ENCODE measurements at regions of chr4 and their contacts with region 1.

Region 1: DNA sequence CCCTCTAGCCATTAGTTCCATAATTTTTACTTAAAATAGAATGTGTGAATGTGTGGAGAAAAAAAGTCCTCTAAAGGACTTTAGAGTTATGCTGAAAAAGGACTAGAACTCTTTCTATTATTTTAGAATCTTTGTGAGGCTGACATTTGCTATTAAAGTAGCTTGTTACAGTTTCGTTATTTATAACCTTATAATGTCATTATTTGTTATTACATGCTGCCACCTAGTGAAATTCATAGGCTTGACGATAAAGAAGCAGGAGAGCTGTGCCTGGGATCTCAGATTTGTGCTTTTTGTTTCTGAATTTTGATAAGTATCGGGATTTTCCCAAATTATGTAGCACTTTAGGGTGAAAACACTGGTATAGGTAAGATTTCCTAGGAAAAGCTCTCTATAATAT is 38.5 kb upstream of the TAPT1 start:
- DNase-seq: peak; percentile 24
- H3K4me3 ChIP-seq: no peak overlapping the region
- H3K27ac ChIP-seq: no peak overlapping the region
- H3K4me1 ChIP-seq: peaks cover 13% of the 10 kb centered on the region
- H3K27me3 ChIP-seq: no peaks in the 10 kb centered on the region
- CTCF ChIP-seq: peak; percentile 55

Region 2: DNA sequence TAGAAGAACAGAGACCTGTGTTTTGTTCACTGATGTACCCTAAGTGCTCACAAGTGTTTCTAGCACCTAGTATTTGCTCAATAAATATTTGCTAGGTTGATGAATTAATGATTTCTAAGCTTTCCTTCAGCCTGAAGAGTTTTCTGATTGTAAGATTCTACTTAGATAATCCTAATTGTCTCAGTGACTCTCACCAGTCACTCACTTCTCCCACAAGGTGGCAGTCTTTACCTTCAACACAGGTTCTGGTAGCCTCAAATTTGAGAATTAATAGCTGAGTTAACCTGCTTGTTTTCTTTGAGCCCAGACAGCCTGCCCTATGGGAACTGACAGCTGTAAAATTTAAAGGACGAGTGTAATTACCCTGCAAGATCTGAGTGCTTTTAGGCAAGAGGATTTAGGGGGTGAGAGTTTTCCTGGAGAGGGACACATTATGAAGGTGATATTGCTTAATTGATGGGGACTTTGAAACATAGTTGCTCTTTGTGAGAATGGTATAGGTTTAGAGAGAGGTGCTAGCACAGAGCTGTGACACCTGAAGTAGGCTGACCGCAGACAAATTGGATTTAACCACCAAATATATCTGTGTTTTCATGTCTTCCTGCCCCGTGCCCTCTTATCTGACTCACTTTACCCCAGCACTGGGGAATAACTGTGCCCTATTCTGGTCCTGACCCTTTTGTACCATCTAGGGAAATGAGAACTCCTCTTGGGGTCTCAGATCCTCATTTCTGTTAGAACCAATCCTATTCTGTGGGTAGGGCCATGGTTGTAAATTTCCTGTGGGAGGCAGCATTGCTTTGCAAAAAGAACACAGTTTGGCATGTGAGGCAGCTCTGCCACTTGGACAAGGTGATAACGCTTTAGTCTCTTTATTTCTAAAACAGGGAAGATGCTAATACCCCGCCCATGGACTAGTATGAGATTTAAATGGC is 458.9 kb before region 1 on chr4:
- CTCF ChIA-PET with region 1: no interaction called
- dilution Hi-C with region 1: no loop called
- in situ Hi-C with region 1: loop called in 1 of 2 experiments (anchors 25 kb)
- intact Hi-C with region 1: loop called (anchors 5 kb)
- DNase-seq: peak; percentile 56
- H3K4me3 ChIP-seq: no peak overlapping the region
- H3K27ac ChIP-seq: no peak overlapping the region
- H3K4me1 ChIP-seq: no peaks in the 10 kb centered on the region
- H3K27me3 ChIP-seq: no peaks in the 10 kb centered on the region
- CTCF ChIP-seq: peak; percentile 82 to 86

Region 3: DNA sequence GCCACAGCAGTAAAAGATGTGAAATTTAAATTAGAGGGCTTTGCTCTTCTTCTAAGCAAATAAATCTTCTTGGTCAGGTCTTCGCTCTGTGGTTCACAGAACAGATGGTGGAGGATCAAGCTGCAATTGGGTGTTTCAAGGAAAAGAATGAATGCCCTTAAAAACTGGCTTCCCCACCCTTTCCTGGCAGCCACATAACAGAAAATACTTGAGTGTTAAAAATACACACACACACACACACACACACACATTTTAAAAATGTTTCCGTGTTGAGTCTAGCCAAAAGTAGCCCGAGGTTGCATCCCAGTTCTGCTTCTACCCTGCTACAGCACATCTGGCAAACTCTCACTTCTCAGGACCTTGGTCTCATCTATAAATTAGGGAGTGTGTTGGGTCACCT is 245.1 kb before region 1 on chr4:
- CTCF ChIA-PET with region 1: no interaction called
- dilution Hi-C with region 1: no loop called
- in situ Hi-C with region 1: loop called (anchors 5 to 10 kb)
- intact Hi-C with region 1: no loop called
- DNase-seq: no peak
- H3K4me3 ChIP-seq: no peak overlapping the region
- H3K27ac ChIP-seq: no peak overlapping the region
- H3K4me1 ChIP-seq: no peaks in the 10 kb centered on the region
- H3K27me3 ChIP-seq: no peaks in the 10 kb centered on the region
- CTCF ChIP-seq: no peak

Region 4: DNA sequence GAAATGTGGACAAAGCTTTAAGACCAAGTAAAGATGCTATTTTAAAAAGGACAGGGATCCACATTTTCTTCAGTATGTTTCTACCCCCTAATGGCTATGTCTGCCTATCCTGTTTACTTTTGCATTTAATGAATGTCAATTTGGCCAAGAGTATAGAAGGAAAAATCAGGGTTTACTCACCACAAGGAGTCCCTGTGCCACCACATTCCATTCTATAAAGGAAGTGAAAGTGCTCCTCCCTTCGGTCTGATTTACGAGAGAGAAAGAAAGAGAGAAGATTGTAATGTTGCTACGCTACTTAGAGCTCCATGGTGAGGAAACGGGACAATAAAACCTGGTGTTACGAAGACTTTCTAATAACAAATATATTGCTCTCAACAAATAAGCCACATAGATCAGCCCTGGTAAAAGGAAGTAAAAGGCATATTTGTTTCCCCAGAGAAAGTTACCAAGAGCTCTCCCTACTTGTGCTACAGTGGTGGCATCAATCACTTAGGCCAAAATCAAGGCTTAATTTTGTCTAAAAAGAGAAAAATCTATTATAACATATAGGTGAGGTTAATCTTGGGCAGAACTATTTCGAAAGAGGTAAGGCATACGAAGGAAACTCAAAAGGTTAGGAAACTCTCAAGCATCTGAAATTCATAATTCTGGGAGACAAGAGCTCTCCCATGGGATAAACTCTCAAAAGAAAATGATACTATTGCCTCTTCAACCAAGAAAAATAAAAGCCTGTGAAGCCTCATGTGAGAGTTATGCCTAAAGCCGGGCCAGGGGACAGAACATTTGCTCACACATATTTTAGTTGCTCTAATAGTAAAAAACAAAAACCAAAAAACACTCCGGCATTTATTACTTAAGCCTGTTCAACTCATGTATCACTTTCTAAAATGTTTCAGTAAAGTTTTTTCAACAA is 68.1 kb before region 1 on chr4:
- CTCF ChIA-PET with region 1: interaction called, 6 read pairs
- dilution Hi-C with region 1: no loop called
- in situ Hi-C with region 1: no loop called
- intact Hi-C with region 1: loop called (anchors 1 kb)
- DNase-seq: peak; percentile 72
- H3K4me3 ChIP-seq: peak overlapping the region; percentile 22 to 35 (median 26)
- H3K27ac ChIP-seq: peak overlapping the region; percentile 71
- H3K4me1 ChIP-seq: peaks cover 14% of the 10 kb centered on the region
- H3K27me3 ChIP-seq: no peaks in the 10 kb centered on the region
- CTCF ChIP-seq: peak; percentile 25 to 55

Region 5: DNA sequence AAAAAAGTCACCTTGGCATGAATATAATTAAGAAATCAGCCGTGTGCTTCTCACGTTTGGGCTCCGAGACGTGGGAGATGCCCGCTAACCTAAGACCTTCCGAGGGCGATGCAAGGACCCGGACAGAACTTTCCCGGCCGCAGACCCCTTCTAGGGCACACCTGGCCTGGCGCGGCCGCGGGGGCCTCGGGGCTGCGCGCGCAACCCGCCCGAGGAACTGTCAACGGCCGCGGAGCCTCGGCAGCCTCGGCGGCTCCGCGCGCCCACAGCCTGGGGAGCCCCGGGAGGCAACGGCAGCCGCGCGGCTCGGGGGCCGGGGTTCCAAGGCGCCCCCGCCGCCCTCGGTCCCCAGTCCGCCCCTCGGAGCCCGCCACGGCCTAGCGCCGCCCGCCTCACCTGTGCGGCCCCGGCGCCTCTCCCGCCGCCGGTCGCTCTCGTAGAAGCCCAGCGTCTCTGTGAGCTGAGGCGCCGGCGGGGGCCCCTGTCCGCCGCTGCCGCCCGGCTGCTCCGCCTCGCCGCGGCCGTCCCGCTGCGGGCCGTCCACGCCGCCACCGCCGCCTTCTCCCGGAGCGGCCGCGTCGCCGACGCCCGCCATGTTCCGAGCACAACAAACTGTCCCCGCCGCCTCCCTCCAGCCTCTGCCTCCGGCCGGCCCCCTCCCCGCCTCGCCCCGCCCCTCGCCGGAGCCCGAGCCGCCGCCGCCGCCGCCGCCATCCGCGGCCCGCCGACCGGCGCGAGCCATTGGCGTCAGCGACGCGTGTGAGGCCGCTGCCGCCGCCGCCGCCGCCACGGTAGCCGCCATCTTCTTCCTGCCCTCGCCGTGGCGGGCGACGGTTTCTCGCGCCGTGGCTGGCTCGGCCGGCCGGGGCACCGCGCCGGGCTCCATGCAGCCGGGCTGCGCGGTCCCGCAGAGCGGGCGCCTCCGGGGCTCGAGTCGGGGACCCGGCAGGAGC is 38.7 kb before region 1 on chr4 and contains the start of gene TAPT1:
- CTCF ChIA-PET with region 1: no interaction called
- dilution Hi-C with region 1: no loop called
- in situ Hi-C with region 1: no loop called
- intact Hi-C with region 1: loop called (anchors 2 kb)
- DNase-seq: peak; percentile 57
- H3K4me3 ChIP-seq: peak within 1 kb of the TSS; percentile 58 to 93 (median 92)
- H3K27ac ChIP-seq: peak within 1 kb of the TSS; percentile 45
- H3K4me1 ChIP-seq: no peaks in the 10 kb centered on the region
- H3K27me3 ChIP-seq: no peaks in the 10 kb centered on the region
- CTCF ChIP-seq: no peak
- total RNA-seq, gene TAPT1: 16.2 to 21.1 TPM